GM12878 (cell line): ENCODE measurements at regions of chr2 and their contacts with region 1.

Region 1: GRCh38 chr2:178804791-178805190 is 2.4 kb downstream of the TTN start:
- DNase-seq: no peak
- ATAC-seq: peak; percentile 80
- H3K4me3 ChIP-seq: no peak overlapping the region
- H3K27ac ChIP-seq: no peak overlapping the region
- H3K4me1 ChIP-seq: no peaks in the 10 kb centered on the region
- H3K27me3 ChIP-seq: no peaks in the 10 kb centered on the region
- CTCF ChIP-seq: peak; percentile 33 to 61 (median 55)
- EP300 ChIP-seq: no peak
- POLR2A ChIP-seq: no peak
- RAD21 ChIP-seq: no peak

Region 2: DNA sequence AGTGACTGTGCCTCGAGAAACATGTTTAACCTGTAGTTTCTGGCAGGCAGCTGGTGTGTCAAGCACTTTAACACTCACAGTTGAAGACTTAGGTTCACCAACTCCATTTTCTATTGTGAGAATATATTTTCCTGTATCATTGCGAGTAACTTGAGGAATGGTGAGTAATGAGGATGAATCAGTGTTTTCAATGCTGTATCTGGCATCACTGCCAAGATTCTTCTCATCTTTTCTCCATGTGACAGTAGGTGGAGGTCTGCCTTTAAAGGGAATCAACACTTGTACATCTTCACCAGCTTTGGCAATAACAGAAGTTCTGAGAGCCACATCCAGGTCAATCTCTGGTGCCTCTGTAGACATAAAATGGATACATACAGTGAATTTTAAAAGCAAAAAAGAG is 251.7 kb before region 1 on chr2:
- CTCF ChIA-PET with region 1: no interaction called
- POLR2A ChIA-PET with region 1: no interaction called
- RAD21 ChIA-PET with region 1: no interaction called
- SMC1A ChIA-PET with region 1: no interaction called
- in situ Hi-C with region 1: no loop called
- intact Hi-C with region 1: no loop called
- DNase-seq: no peak
- ATAC-seq: no peak
- H3K4me3 ChIP-seq: no peak overlapping the region
- H3K27ac ChIP-seq: no peak overlapping the region
- H3K4me1 ChIP-seq: no peaks in the 10 kb centered on the region
- H3K27me3 ChIP-seq: no peaks in the 10 kb centered on the region
- CTCF ChIP-seq: no peak
- EP300 ChIP-seq: no peak
- POLR2A ChIP-seq: no peak
- RAD21 ChIP-seq: no peak

Region 3: DNA sequence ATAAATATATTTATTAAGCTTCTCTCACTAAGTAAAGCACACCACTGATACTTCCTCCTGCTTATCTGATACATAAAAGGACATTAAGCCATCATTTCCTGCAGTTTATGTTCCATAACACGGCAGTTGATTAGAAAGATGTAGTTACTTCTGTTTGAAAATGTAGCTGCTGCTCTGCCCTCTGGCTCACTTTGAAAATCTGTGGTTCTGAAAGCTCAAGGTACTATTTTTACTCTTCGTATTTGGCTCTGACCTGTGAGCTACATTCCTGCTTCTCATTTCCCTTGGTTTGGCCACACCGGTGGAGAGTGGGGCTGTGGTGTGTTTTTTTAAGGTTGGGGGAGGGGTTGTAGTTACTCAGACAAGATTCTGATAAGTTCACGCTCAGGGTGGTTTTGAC is 15.2 kb after region 1 on chr2:
- CTCF ChIA-PET with region 1: interaction called, 10 read pairs
- POLR2A ChIA-PET with region 1: no interaction called
- RAD21 ChIA-PET with region 1: interaction called, 3 read pairs
- SMC1A ChIA-PET with region 1: interaction called, 4 read pairs
- in situ Hi-C with region 1: no loop called
- intact Hi-C with region 1: no loop called
- DNase-seq: peak; percentile 17
- ATAC-seq: peak; percentile 90
- H3K4me3 ChIP-seq: no peak overlapping the region
- H3K27ac ChIP-seq: no peak overlapping the region; the same call in 1 of the 2 replicates
- H3K4me1 ChIP-seq: peaks cover 6% of the 10 kb centered on the region; the same call in 1 of the 2 replicates
- H3K27me3 ChIP-seq: no peaks in the 10 kb centered on the region
- CTCF ChIP-seq: no peak
- EP300 ChIP-seq: no peak
- POLR2A ChIP-seq: no peak
- RAD21 ChIP-seq: 0 out of 2 replicates have a peak, but pooled peaks have one; percentile 3